T-cell (primary cell): ENCODE measurements at regions of chr13 and their contacts with region 1.

Region 1: GRCh38 chr13:35649162-35649561 is 172.7 kb upstream of the MAB21L1 start:
- DNase-seq: no peak
- ATAC-seq: no peak
- H3K4me3 ChIP-seq: no peak overlapping the region
- H3K4me3 Mint-ChIP-seq: no peak overlapping the region
- H3K27ac ChIP-seq: no peak overlapping the region
- H3K27ac Mint-ChIP-seq: no peak overlapping the region
- H3K4me1 ChIP-seq: no peaks in the 10 kb centered on the region
- H3K4me1 Mint-ChIP-seq: no peaks in the 10 kb centered on the region
- H3K27me3 ChIP-seq: no peaks in the 10 kb centered on the region
- H3K27me3 Mint-ChIP-seq: no peaks in the 10 kb centered on the region

Region 2: GRCh38 chr13:34189946-34190345 is 1459.2 kb before region 1 on chr13:
- CTCF ChIA-PET with region 1: no interaction called
- POLR2A ChIA-PET with region 1: interaction called in 1 of 2 experiments, 15 read pairs
- DNase-seq: no peak
- ATAC-seq: no peak
- H3K4me3 ChIP-seq: no peak overlapping the region
- H3K4me3 Mint-ChIP-seq: no peak overlapping the region
- H3K27ac ChIP-seq: no peak overlapping the region
- H3K27ac Mint-ChIP-seq: no peak overlapping the region
- H3K4me1 ChIP-seq: no peaks in the 10 kb centered on the region
- H3K4me1 Mint-ChIP-seq: no peaks in the 10 kb centered on the region
- H3K27me3 ChIP-seq: peaks cover 0 to 3% of the 10 kb centered on the region in 2 experiments
- H3K27me3 Mint-ChIP-seq: peaks cover 0 to 2% of the 10 kb centered on the region in 2 donors